A549 (cell line): ENCODE measurements at regions of chr15 and their contacts with region 1.

Region 1: GRCh38 chr15:83248151-83249029 is 36.1 kb downstream of the BNC1 start:
- DNase-seq: peak; percentile 18 to 71
- ATAC-seq: peak; percentile 79 to 93
- H3K4me3 ChIP-seq: no peak overlapping the region
- H3K27ac ChIP-seq: peak overlapping the region in 1 of 2 experiments; percentile 10; a peak in 1 of 6 replicates
- H3K4me1 ChIP-seq: no peaks in the 10 kb centered on the region
- CTCF ChIP-seq: peak; percentile 98
- EP300 ChIP-seq: no peak
- POLR2A ChIP-seq: no peak
- RAD21 ChIP-seq: peak; percentile 97 to 98

Region 2: GRCh38 chr15:83100097-83100646 is 148.2 kb before region 1 on chr15:
- CTCF ChIA-PET with region 1: no interaction called
- POLR2A ChIA-PET with region 1: no interaction called
- DNase-seq: no peak
- ATAC-seq: no peak
- H3K4me3 ChIP-seq: no peak overlapping the region
- H3K27ac ChIP-seq: no peak overlapping the region
- H3K4me1 ChIP-seq: no peaks in the 10 kb centered on the region
- CTCF ChIP-seq: no peak
- EP300 ChIP-seq: no peak
- POLR2A ChIP-seq: no peak
- RAD21 ChIP-seq: no peak

Region 3: DNA sequence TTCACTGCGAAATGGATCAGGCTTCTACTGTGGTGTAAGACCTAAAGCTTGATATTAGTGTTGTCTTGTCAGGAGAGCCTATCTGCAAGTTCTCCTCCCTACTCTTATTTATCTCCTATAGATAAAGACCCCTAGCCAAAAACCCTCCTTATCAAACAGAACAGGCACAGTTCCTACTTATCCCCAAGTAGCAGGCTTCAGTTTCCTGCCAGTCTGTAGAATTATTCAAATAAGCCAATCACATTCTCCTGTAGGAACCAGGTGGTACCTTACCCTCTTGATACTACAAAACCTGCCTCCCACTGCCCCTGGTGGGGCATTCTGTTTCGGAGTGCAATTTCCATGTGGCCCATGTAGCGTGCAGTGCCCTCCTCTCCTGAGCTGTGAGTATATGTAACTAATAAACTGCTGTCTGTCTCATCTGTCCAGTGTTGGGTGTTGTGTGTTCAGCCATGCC is 69.5 kb before region 1 on chr15:
- CTCF ChIA-PET with region 1: no interaction called
- POLR2A ChIA-PET with region 1: no interaction called
- DNase-seq: no peak
- ATAC-seq: peak in 1 of 2 experiments; percentile 49; a peak in 1 of 6 replicates
- H3K4me3 ChIP-seq: no peak overlapping the region
- H3K27ac ChIP-seq: no peak overlapping the region
- H3K4me1 ChIP-seq: no peaks in the 10 kb centered on the region
- CTCF ChIP-seq: no peak
- EP300 ChIP-seq: no peak
- POLR2A ChIP-seq: no peak
- RAD21 ChIP-seq: no peak

Region 4: GRCh38 chr15:83283138-83283812 is 34.9 kb after region 1 on chr15:
- CTCF ChIA-PET with region 1: interaction called, 40 read pairs
- POLR2A ChIA-PET with region 1: interaction called, 4 read pairs
- DNase-seq: no peak
- ATAC-seq: no peak
- H3K4me3 ChIP-seq: peak overlapping the region; percentile 40
- H3K27ac ChIP-seq: peak overlapping the region in 1 of 2 experiments; percentile 39; a peak in 2 of 6 replicates
- H3K4me1 ChIP-seq: peaks cover 29% of the 10 kb centered on the region
- CTCF ChIP-seq: no peak
- EP300 ChIP-seq: no peak
- POLR2A ChIP-seq: no peak
- RAD21 ChIP-seq: no peak

Region 5: DNA sequence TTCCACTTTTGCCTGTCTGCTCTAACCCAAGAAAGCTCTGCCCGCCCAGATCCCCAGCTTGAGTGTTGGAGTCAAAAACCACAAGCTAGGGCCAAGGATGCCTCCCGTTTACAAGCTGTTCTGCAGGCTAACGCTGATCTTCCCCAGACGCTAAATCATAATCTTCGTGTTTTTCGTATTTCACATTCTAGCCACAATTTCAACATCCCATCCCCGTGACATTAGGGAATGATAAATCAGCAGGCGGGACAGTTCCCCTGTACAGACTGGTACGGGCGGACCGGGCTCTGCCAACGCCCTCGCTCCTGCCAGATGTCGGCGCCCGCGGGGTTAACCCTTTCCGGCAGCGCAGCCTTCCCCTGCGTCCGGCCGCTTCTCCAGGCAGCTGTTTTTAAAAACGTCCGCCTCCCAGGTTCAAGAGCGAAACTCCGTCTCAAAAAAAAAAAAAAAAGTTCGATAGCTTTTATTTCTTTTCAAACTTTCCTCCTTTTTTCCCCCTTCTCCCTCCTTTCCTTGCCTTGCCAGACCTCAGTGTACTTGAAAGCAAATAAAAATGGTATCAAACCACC is 117.1 kb after region 1 on chr15:
- CTCF ChIA-PET with region 1: interaction called, 47 read pairs
- POLR2A ChIA-PET with region 1: no interaction called
- DNase-seq: peak; percentile 32 to 49
- ATAC-seq: peak; percentile 75 to 89
- H3K4me3 ChIP-seq: peak overlapping the region; percentile 39
- H3K27ac ChIP-seq: peak overlapping the region in 1 of 2 experiments; percentile 38; a peak in 4 of 6 replicates
- H3K4me1 ChIP-seq: peaks cover 4% of the 10 kb centered on the region; the same call in 1 of the 3 replicates
- CTCF ChIP-seq: no peak
- EP300 ChIP-seq: no peak
- POLR2A ChIP-seq: no peak
- RAD21 ChIP-seq: no peak

Region 6: GRCh38 chr15:83413054-83413719 is 164.8 kb after region 1 on chr15:
- CTCF ChIA-PET with region 1: interaction called, 12 read pairs
- POLR2A ChIA-PET with region 1: no interaction called
- DNase-seq: no peak
- ATAC-seq: no peak
- H3K4me3 ChIP-seq: no peak overlapping the region
- H3K27ac ChIP-seq: no peak overlapping the region
- H3K4me1 ChIP-seq: no peaks in the 10 kb centered on the region
- CTCF ChIP-seq: no peak
- EP300 ChIP-seq: no peak
- POLR2A ChIP-seq: no peak
- RAD21 ChIP-seq: no peak

Region 7: GRCh38 chr15:83457149-83457548 is 208.8 kb after region 1 on chr15:
- CTCF ChIA-PET with region 1: no interaction called
- POLR2A ChIA-PET with region 1: no interaction called
- DNase-seq: no peak
- ATAC-seq: no peak
- H3K4me3 ChIP-seq: no peak overlapping the region
- H3K27ac ChIP-seq: no peak overlapping the region
- H3K4me1 ChIP-seq: no peaks in the 10 kb centered on the region
- CTCF ChIP-seq: no peak
- EP300 ChIP-seq: no peak
- POLR2A ChIP-seq: no peak
- RAD21 ChIP-seq: no peak

Region 8: GRCh38 chr15:83496766-83497525 is 248.6 kb after region 1 on chr15:
- CTCF ChIA-PET with region 1: interaction called, 11 read pairs
- POLR2A ChIA-PET with region 1: no interaction called
- DNase-seq: no peak
- ATAC-seq: no peak
- H3K4me3 ChIP-seq: no peak overlapping the region
- H3K27ac ChIP-seq: no peak overlapping the region
- H3K4me1 ChIP-seq: no peaks in the 10 kb centered on the region
- CTCF ChIP-seq: no peak
- EP300 ChIP-seq: no peak
- POLR2A ChIP-seq: no peak
- RAD21 ChIP-seq: no peak

Region 9: DNA sequence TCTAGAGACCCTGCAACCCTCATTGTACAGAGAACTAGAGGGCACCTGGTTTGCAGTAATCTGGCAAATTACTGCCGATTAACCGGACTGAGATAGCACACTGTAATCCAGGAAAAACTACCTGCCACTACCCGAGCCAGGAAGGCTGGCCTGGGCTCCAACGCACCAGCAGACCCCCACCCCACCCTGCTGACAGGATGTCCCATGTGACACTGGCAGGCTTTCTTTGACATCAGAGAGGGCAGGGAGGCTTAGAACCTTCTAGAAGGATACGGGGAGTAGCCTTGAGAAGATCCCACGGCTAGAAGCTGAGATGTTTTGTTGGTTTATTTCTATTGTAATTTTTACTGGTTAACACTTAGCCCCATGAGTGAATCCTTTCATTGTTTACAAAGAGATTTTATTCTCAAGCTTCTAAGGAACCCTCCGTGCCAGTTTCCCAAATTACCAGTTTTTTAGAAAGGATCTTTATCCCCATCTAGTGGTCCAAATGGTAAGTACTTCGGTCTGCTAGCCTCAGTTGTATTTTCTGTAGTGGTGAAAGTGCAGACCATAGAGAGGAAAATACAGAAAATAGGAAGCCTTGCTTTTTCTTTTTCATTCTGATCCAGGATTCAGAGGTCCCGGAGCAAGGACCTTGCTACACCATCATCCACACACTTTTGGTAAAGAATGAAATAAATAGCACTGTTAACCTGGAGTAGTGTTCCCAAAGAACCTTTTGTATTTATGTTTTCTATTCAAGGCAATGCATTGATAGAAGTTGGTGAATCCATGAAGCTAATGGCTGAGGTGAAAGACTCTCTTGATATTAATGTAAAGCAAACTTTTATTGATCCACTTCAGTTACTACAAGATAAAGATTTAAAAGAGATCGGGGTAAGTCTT is 323.7 kb after region 1 on chr15:
- CTCF ChIA-PET with region 1: interaction called, 37 read pairs
- POLR2A ChIA-PET with region 1: no interaction called
- DNase-seq: peak; percentile 22 to 29
- ATAC-seq: peak in 1 of 2 experiments; percentile 69; a peak in 2 of 6 replicates
- H3K4me3 ChIP-seq: no peak overlapping the region
- H3K27ac ChIP-seq: no peak overlapping the region
- H3K4me1 ChIP-seq: no peaks in the 10 kb centered on the region
- CTCF ChIP-seq: peak; percentile 61
- EP300 ChIP-seq: no peak
- POLR2A ChIP-seq: no peak
- RAD21 ChIP-seq: peak; percentile 53 to 55